Ascending aorta (tissue), 2 donors: ENCODE measurements at regions of chr1 and their contacts with region 1.

Region 1: DNA sequence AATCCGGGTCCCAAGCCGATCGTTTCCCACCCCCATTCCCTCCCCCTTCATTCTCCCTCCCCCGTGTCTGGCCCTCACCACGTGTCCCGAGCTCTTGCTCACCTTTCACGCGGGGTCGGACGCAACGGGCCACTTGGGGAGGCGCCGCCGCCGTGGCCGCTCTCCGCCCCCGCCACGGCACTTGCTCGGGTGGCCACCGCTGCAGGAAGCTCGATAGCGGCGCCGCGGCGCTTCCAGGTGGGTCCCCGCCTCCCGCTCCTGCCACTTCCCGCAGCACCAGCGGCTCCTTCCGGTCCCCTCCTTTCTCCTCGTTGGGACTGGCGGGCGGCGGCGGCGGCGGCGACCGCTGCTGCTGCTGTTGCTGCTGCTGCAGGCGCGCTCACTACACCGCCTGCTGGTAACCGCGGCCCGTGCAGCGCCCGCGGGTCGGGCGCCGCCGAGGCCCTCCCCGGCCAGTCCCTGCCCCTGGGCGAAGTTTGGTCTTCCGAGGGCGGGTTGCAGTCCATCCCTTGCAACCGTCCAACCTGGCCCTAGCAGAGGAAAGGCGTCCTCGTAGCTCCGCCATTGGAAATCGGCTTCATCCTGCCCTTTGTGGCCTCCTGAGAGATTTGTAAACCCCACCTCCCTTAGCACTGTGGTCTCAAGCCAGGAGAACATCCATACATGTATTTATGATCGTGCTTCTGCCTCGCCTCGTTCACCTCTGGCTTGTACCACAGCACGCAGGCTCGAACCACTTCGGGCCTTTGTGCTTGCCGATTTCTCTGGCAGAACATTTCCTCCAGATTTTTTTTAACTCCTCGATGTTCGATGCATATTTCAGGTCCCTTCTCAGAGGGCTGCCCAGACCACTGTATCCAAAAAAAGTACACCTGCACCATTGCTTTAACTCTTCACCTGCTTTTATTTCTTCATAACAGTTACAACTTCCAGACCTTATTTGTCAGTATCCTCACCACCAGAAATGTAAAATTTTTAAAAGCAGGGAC is 996 bp upstream of the ZZZ3 start:
- DNase-seq: peak; percentile 67 to 96
- H3K4me3 ChIP-seq: peak overlapping the region; percentile 63 to 71
- H3K27ac ChIP-seq: peak overlapping the region; percentile 90
- H3K4me1 ChIP-seq: peaks cover 0 to 25% of the 10 kb centered on the region in 2 donors
- H3K27me3 ChIP-seq: no peaks in the 10 kb centered on the region
- CTCF ChIP-seq: peak; percentile 79 to 95 (median 92)

Region 2: DNA sequence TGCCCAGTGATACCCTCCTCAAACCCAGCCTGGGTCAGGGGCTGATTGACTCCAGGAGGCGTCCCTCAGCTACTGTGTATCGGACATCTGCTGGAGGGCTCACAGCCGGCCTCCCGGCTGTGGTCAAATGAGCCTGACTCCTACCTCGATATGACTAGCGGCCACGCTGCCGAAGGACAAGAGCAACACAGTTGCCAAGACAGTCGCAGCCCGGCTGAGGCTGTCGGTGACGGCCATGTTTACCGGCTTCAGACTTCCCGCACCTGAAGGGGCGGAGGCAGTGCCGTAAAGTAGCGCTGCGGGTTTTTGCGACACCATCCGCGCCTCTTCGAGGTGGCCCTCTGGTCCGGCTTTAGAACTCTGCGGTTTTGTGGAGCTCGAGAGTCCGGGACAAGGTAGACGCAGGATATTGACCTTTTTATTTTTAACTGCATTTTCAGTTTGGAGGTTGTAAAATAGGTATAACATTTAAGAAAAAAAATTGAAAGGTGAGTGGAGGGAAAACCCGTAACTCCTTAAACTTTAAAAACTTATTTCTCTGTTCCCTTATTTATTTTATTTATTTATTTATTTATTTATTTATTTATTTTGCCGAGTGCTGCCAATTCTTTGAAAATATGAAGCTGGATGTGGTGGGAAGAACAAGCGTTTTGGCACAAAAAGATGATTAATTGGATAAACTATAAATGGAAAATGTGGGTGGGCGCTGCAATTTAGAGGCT is 464.1 kb before region 1 on chr1 and contains the start of gene PIGK:
- intact Hi-C with region 1: loop called (anchors 2 kb)
- DNase-seq: peak; percentile 29 to 90
- H3K4me3 ChIP-seq: peak within 1 kb of the TSS; percentile 75 to 79
- H3K27ac ChIP-seq: peak within 1 kb of the TSS; percentile 84 to 86
- H3K4me1 ChIP-seq: peaks cover 0 to 11% of the 10 kb centered on the region in 2 donors
- H3K27me3 ChIP-seq: no peaks in the 10 kb centered on the region
- CTCF ChIP-seq: no peak
- total RNA-seq, gene PIGK: 3.4 TPM

Region 3: GRCh38 chr1:77832901-77833300 is 149.4 kb after region 1 on chr1:
- intact Hi-C with region 1: loop called (anchors 5 kb)
- DNase-seq: no peak
- H3K4me3 ChIP-seq: peak overlapping the region in 1 of 2 donors; percentile 35
- H3K27ac ChIP-seq: peak overlapping the region; percentile 83 to 93
- H3K4me1 ChIP-seq: peaks cover 3 to 55% of the 10 kb centered on the region in 2 donors
- H3K27me3 ChIP-seq: no peaks in the 10 kb centered on the region
- CTCF ChIP-seq: no peak

Region 4: DNA sequence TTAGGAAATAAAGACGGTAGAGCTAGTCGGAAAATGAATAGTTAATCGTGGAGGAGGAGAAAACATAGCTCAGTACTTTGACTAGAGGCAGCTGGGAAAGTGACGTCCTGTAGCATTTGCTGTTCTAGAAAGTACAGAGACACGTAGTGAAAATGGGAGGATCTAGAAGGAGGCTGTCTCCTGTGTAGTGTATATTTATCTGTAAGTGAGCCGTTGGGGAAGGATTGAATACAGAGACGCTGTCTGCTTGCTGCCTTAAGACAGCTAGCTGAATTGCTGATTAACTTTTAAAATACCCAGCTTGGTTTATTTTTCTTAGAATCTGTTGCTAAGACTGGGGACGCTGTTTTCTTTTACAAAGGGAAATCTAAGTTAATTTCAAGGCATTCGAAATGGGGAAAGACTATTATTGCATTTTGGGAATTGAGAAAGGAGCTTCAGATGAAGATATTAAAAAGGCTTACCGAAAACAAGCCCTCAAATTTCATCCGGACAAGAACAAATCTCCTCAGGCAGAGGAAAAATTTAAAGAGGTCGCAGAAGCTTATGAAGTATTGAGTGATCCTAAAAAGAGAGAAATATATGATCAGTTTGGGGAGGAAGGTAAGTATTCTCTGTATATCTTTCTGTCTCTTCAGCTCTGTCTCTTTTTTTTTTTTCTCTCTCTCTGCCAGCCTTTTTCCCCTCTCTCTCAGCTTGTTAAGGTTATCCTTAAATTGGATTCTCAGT is 321.4 kb after region 1 on chr1 and contains the start of gene DNAJB4:
- intact Hi-C with region 1: loop called (anchors 1 kb)
- DNase-seq: peak; percentile 40 to 90
- H3K4me3 ChIP-seq: peak within 1 kb of the TSS; percentile 55 to 74
- H3K27ac ChIP-seq: peak within 1 kb of the TSS; percentile 88
- H3K4me1 ChIP-seq: peaks cover 0 to 6% of the 10 kb centered on the region in 2 donors
- H3K27me3 ChIP-seq: no peaks in the 10 kb centered on the region
- CTCF ChIP-seq: no peak
- total RNA-seq, gene DNAJB4: 20.1 TPM